ENCODE measurements at regions of chr11 and their contacts with region 1.

Region 1: GRCh38 chr11:9613118-9613829 is 39.8 kb downstream of the WEE1 start:
- DNase-seq: peak; percentile 97
- ATAC-seq: peak; percentile 87 to 88
- H3K4me3 ChIP-seq: peak overlapping the region; percentile 42
- H3K27ac ChIP-seq: peak overlapping the region; percentile 94 to 97
- H3K4me1 ChIP-seq: peaks cover 27% of the 10 kb centered on the region
- CTCF ChIP-seq: peak; percentile 87
- EP300 ChIP-seq: peak in 1 of 2 experiments; percentile 55; a peak in 1 of 5 replicates
- POLR2A ChIP-seq: no peak; the same call in 1 of the 2 replicates
- RAD21 ChIP-seq: peak; percentile 84 to 87

Region 2: DNA sequence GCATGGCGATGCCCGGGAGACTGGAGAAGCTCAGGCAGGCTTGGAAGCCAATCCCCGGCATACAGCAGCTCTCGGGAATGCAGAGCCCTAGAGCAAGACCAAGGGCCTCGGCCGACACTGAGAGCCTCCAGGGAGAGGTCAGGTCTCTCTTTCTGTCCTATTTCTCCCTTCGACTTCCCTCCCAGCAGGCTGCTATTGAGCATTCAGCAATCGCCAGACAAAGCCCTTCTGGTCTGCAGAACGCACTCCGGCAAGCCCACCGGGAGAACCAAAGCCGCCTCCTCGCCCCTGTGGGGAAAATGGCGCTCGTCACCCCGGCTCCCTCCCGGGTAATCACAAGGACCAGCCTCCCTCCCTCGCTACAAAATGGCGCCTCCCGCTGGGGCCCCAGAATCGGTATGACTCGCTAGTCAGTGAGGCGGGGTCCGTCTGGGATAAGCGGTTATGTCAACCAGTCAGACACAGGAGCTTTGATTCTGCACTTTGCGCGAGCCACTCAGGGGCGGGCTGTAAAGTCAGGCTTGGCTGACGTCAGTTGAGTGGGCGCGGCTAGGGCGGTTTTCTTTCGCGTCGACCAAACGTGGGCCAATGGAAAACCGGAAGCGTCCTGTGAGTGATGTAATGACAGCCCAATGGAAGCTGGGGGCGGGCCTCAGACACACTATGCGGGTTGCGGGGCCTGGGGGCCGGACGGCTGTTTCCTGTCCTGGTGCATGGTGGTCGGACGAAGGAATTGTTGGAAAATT is 152.8 kb before region 1 on chr11 and contains the start of gene ZNF143:
- CTCF ChIA-PET with region 1: interaction called, 3 read pairs
- POLR2A ChIA-PET with region 1: interaction called, 24 read pairs
- DNase-seq: peak; percentile 97 to 100
- ATAC-seq: peak; percentile 92 to 93
- H3K4me3 ChIP-seq: peak within 1 kb of the TSS; percentile 83
- H3K27ac ChIP-seq: peak within 1 kb of the TSS; percentile 99
- H3K4me1 ChIP-seq: peaks cover 20% of the 10 kb centered on the region
- CTCF ChIP-seq: no peak
- EP300 ChIP-seq: no peak
- POLR2A ChIP-seq: peak; percentile 80
- RAD21 ChIP-seq: no peak
- polyA plus RNA-seq, gene ZNF143: 37.7 and 38.4 TPM in 2 replicates

Region 3: GRCh38 chr11:9565822-9566560 is 47.3 kb before region 1 on chr11:
- CTCF ChIA-PET with region 1: interaction called, 19 read pairs
- POLR2A ChIA-PET with region 1: interaction called, 6 read pairs
- DNase-seq: peak; percentile 93 to 99
- ATAC-seq: peak; percentile 91 to 97
- H3K4me3 ChIP-seq: peak overlapping the region; percentile 1; the same call in 1 of the 3 replicates
- H3K27ac ChIP-seq: peak overlapping the region; percentile 78 to 83
- H3K4me1 ChIP-seq: peaks cover 52% of the 10 kb centered on the region
- CTCF ChIP-seq: no peak
- EP300 ChIP-seq: peak; percentile 34 to 35; a peak in 2 of 5 replicates
- POLR2A ChIP-seq: no peak
- RAD21 ChIP-seq: peak in 1 of 2 experiments; percentile 33; a peak in 1 of 5 replicates

Region 4: GRCh38 chr11:9601037-9601875 is 12.0 kb before region 1 on chr11:
- CTCF ChIA-PET with region 1: interaction called, 27 read pairs
- POLR2A ChIA-PET with region 1: no interaction called
- DNase-seq: no peak
- ATAC-seq: peak; percentile 25 to 33; a peak in 2 of 6 replicates
- H3K4me3 ChIP-seq: no peak overlapping the region
- H3K27ac ChIP-seq: 0 out of 6 replicates have a peak overlapping the region, but pooled peaks of 1 of the 2 experiments have one; percentile 16
- H3K4me1 ChIP-seq: peaks cover 5% of the 10 kb centered on the region; the same call in 1 of the 3 replicates
- CTCF ChIP-seq: no peak
- EP300 ChIP-seq: no peak
- POLR2A ChIP-seq: no peak
- RAD21 ChIP-seq: no peak

Region 5: GRCh38 chr11:9716275-9717039 is 103.2 kb after region 1 on chr11:
- CTCF ChIA-PET with region 1: no interaction called
- POLR2A ChIA-PET with region 1: no interaction called
- DNase-seq: peak in 1 of 2 experiments; percentile 31
- ATAC-seq: peak in 1 of 2 experiments; percentile 42; a peak in 3 of 6 replicates
- H3K4me3 ChIP-seq: no peak overlapping the region
- H3K27ac ChIP-seq: peak overlapping the region; percentile 60 to 70
- H3K4me1 ChIP-seq: peaks cover 23% of the 10 kb centered on the region
- CTCF ChIP-seq: no peak
- EP300 ChIP-seq: no peak
- POLR2A ChIP-seq: no peak
- RAD21 ChIP-seq: no peak

Region 6: DNA sequence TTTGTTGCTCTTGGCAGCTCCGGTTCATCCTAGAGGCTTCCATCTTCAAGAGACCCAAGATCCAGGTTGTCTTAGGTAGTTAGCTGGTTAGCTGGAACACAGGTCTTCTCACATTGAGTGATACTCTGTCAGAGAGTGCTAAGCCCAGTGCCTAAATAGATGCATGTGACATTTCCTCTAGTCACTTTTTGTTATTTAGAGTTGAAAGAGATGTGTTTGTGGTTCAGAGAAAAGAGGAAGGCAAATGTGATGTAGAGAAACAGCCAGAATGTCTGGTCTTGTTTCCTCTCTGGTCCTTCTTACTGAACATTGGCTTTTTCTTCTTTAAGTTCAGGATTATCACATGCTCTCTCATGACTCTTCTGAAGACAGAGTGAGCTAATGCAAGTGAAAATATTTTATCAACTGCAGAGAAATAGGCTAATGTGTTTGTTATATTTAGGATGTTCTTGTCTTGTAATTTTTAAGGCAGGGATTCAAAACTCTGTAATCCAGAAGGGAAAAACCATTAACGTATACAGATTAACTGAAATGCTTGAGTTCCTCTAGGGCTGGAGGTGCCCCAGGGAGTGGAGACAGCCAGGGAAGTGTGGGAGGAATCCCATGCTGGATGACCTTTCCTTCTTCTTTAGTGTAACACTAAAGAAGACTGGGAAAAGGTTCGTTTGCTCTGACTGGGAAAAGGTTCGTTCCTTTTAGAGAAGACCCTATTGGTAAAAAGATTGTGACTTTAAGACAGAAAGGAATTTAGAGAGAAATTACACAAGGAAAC is 126.0 kb after region 1 on chr11:
- CTCF ChIA-PET with region 1: interaction called, 100 read pairs
- POLR2A ChIA-PET with region 1: interaction called, 5 read pairs
- DNase-seq: no peak
- ATAC-seq: peak in 1 of 2 experiments; percentile 26; a peak in 2 of 6 replicates
- H3K4me3 ChIP-seq: no peak overlapping the region
- H3K27ac ChIP-seq: peak overlapping the region; percentile 63 to 76
- H3K4me1 ChIP-seq: peaks cover 51% of the 10 kb centered on the region
- CTCF ChIP-seq: no peak
- EP300 ChIP-seq: no peak
- POLR2A ChIP-seq: no peak
- RAD21 ChIP-seq: no peak

Region 7: DNA sequence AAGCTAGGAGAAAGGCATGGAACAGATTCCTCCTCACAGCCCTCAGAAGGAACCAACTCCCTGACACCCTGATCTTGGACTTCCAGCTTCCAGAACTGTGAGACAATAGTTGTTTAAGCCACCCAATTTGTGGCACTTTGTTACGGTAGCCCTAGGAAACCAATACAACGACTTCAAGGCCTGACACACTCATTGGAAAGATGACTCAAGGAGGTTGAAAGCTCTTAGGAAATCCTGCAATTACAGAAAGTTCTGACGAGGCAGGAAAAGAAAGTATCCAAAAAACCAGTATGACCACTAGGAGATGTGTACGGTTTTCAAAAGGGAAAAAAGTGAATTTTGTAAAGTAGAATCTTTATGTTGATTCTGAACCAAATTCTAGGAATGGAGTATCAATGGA is 212.0 kb after region 1 on chr11:
- CTCF ChIA-PET with region 1: no interaction called
- POLR2A ChIA-PET with region 1: no interaction called
- DNase-seq: no peak
- ATAC-seq: no peak
- H3K4me3 ChIP-seq: no peak overlapping the region
- H3K27ac ChIP-seq: no peak overlapping the region
- H3K4me1 ChIP-seq: peaks cover 34% of the 10 kb centered on the region
- CTCF ChIP-seq: no peak
- EP300 ChIP-seq: no peak
- POLR2A ChIP-seq: no peak
- RAD21 ChIP-seq: no peak

Region 8: GRCh38 chr11:10307442-10308207 is 694.4 kb after region 1 on chr11:
- CTCF ChIA-PET with region 1: interaction called, 14 read pairs
- POLR2A ChIA-PET with region 1: interaction called, 5 read pairs
- DNase-seq: peak; percentile 91 to 93
- ATAC-seq: peak; percentile 45 to 61
- H3K4me3 ChIP-seq: peak overlapping the region; percentile 75
- H3K27ac ChIP-seq: peak overlapping the region; percentile 94
- H3K4me1 ChIP-seq: peaks cover 29% of the 10 kb centered on the region
- CTCF ChIP-seq: peak; percentile 99
- EP300 ChIP-seq: peak in 1 of 2 experiments; percentile 41; a peak in 2 of 5 replicates
- POLR2A ChIP-seq: peak; percentile 54
- RAD21 ChIP-seq: peak; percentile 88 to 98

Measured in A549 (cell line).